Gastrocnemius medialis (tissue), 4 donors: ENCODE measurements at regions of chr5 and their contacts with region 1.

Region 1: DNA sequence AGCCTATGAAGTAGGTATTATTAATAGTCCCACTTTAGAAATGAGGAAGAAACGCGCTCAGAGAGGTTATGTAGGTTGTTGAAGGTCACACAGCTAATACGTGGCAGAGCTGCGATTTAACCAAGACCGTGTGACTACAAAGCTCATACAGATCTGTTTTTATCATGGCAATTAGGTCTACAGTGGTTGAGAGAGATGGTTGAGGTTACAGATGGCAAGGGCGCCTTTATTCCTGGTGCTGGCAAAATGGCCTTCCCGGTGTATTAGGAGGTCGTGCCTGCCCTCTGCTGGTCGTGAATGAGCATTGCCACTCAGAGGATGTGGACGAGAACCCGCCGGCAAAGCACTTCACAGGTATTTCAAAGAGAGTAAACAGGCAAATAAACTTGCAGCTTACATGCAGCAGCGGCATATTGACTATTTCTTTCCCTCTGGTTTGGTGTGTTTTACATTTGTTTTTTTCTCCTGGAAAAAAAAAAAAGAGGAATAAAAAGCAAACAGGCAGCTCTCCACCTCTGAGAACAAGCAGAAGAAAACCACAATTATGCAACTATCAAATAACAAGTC is 65.3 kb upstream of the EGFLAM start:
- DNase-seq: peak; percentile 44 to 63
- ATAC-seq: peak; percentile 78 to 85
- H3K4me3 ChIP-seq: no peak overlapping the region
- H3K27ac ChIP-seq: no peak overlapping the region
- H3K4me1 ChIP-seq: peaks cover 6% of the 10 kb centered on the region in 2 donors
- H3K27me3 ChIP-seq: peaks cover 0 to 11% (median 0%) of the 10 kb centered on the region in 3 donors
- CTCF ChIP-seq: peak; percentile 79 to 88 (median 84)
- POLR2A ChIP-seq: no peak

Region 2: GRCh38 chr5:37412515-37413277 is 780.4 kb before region 1 on chr5:
- in situ Hi-C with region 1: loop called (anchors 25 kb)
- intact Hi-C with region 1: loop called (anchors 2 kb)
- DNase-seq: peak; percentile 13 to 61
- ATAC-seq: peak; percentile 92 to 100
- H3K4me3 ChIP-seq: no peak overlapping the region
- H3K27ac ChIP-seq: no peak overlapping the region
- H3K4me1 ChIP-seq: no peaks in the 10 kb centered on the region
- H3K27me3 ChIP-seq: no peaks in the 10 kb centered on the region
- CTCF ChIP-seq: peak; percentile 63 to 95 (median 70)
- POLR2A ChIP-seq: no peak

Region 3: GRCh38 chr5:37900692-37901091 is 292.4 kb before region 1 on chr5:
- in situ Hi-C with region 1: no loop called
- intact Hi-C with region 1: loop called (anchors 5 kb)
- DNase-seq: peak; percentile 37 to 69
- ATAC-seq: peak; percentile 87
- H3K4me3 ChIP-seq: no peak overlapping the region
- H3K27ac ChIP-seq: no peak overlapping the region
- H3K4me1 ChIP-seq: no peaks in the 10 kb centered on the region
- H3K27me3 ChIP-seq: no peaks in the 10 kb centered on the region
- CTCF ChIP-seq: peak in 1 of 5 experiments; percentile 26
- POLR2A ChIP-seq: no peak

Region 4: GRCh38 chr5:38029482-38030001 is 163.6 kb before region 1 on chr5:
- in situ Hi-C with region 1: loop called in 1 of 4 experiments (anchors 25 kb)
- intact Hi-C with region 1: no loop called
- DNase-seq: no peak
- ATAC-seq: no peak
- H3K4me3 ChIP-seq: no peak overlapping the region
- H3K27ac ChIP-seq: no peak overlapping the region
- H3K4me1 ChIP-seq: no peaks in the 10 kb centered on the region
- H3K27me3 ChIP-seq: no peaks in the 10 kb centered on the region
- CTCF ChIP-seq: no peak
- POLR2A ChIP-seq: no peak